Activated naive CD4-positive, alpha-beta T cell treated with anti-CD3 and anti-CD28 coated beads for 36 hours (primary cell): ENCODE measurements at regions of chrX and their contacts with region 1.

Region 1: DNA sequence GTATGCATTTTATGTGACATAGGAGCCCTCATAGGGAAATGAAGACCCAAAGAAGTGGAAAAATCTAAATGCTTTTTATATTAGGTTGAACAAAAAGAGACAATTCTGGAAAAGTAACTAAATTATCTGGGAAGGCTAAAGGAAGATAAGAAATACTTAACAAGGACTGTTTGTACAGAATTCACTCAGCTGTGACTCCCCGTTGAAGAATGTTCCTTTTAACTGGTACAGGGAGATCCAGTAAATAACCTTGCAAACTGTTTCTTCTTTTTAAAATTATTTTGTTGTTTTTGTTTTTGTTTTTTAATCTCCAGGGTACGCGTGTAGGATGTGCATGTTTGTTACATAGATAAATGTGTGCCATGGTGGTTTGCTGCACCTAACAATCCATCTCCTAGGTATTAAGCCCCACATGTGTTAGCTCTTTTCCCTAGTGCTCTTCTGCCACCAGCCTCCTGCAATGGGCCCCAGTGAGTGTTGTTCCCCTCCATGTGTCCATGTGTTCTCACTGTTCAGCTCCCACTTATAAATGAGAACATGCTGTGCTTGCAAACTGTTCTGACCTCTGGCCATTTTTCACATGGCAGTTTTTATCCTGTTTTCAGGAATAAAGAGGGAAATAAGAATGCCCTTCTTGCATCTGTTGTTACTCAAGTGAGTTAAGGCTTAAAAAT is 81.7 kb downstream of the PWWP3B start:
- DNase-seq: no peak
- H3K4me3 Mint-ChIP-seq: no peak overlapping the region
- H3K27ac Mint-ChIP-seq: no peak overlapping the region
- H3K4me1 Mint-ChIP-seq: no peaks in the 10 kb centered on the region
- H3K27me3 Mint-ChIP-seq: no peaks in the 10 kb centered on the region

Region 2: DNA sequence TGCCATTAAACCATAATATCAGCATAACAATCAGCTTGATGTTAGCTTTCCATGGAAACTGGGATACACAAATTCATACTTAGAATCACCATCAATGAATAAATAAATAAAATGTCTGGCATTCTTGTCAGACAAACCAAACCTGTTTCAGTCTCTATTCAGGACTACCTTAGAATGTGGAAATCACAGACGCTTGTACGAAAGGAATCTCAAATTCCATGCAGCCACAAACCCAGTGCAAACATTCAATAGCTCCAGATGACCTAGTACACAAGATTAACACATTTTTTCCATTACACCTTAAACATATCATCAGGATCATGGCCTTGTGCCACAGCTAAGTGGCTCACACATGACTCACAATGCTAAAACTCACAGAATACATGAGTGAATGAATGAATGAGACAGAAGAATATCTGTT is 52.4 kb after region 1 on chrX:
- CTCF ChIA-PET with region 1: no interaction called
- intact Hi-C with region 1: loop called (anchors 10 kb)
- DNase-seq: no peak
- H3K4me3 Mint-ChIP-seq: no peak overlapping the region
- H3K27ac Mint-ChIP-seq: no peak overlapping the region
- H3K4me1 Mint-ChIP-seq: no peaks in the 10 kb centered on the region
- H3K27me3 Mint-ChIP-seq: no peaks in the 10 kb centered on the region

Region 3: GRCh38 chrX:106707771-106708454 is 458.1 kb after region 1 on chrX:
- CTCF ChIA-PET with region 1: no interaction called
- intact Hi-C with region 1: no loop called
- DNase-seq: peak; percentile 8
- H3K4me3 Mint-ChIP-seq: no peak overlapping the region
- H3K27ac Mint-ChIP-seq: no peak overlapping the region
- H3K4me1 Mint-ChIP-seq: peaks cover 2% of the 10 kb centered on the region
- H3K27me3 Mint-ChIP-seq: no peaks in the 10 kb centered on the region